ENCODE measurements at regions of chr6 and their contacts with region 1.

Region 1: DNA sequence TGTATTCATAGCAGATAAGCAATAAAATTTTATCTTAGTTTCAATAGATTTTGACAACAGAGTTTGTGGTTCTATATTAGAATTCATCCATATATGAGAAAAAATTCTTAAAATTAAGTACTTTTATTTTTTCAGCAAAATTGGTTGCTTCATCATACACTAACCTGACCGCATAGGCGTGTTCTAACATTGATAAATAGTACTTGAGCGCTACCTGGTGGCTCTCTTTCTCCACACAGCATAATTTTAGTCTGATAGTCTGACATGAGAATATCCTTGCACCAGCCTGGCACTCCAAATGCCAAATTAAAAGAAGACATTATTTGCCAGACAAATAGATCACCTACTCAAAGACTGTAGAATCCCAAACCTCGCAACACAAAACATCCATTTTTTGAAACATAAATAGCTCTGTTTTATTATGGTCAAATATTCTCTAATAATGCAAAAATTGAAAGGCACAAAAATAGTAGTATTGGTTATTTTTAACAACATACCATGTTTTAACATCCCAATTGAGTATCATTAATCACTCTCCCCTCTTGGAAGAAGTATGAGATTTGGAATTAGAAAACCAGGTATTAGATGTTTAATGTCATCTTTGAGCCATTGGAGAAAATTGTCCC is 33.0 kb upstream of the FILIP1 start:
- DNase-seq: peak; percentile 34
- H3K4me3 ChIP-seq: no peak overlapping the region
- H3K27ac ChIP-seq: no peak overlapping the region
- H3K27me3 ChIP-seq: no peaks in the 10 kb centered on the region
- CTCF ChIP-seq: peak; percentile 75

Region 2: GRCh38 chr6:75275067-75275466 is 251.5 kb before region 1 on chr6:
- CTCF ChIA-PET with region 1: interaction called, 20 read pairs
- POLR2A ChIA-PET with region 1: no interaction called
- DNase-seq: peak; percentile 70
- H3K4me3 ChIP-seq: no peak overlapping the region
- H3K27ac ChIP-seq: no peak overlapping the region
- H3K27me3 ChIP-seq: no peaks in the 10 kb centered on the region
- CTCF ChIP-seq: no peak

Region 3: DNA sequence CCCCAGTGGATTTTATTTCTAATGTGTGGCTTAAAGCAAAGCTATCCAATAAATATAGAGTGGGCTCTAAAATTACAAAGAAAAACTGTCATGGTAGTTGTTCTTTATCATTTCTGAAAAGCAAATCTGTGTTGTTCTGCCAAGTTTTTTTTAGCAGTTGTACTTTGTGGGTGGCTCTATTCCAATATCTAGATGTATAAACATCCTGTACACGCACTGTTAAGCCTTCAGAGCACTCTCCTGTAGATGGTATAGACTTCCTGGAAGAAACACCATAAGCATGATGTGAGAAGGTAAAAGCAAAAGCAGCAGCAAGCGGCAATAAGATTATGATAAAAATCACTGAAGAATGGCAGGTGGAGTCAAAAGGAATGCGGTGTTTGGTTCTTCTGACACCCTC is 220.6 kb before region 1 on chr6:
- CTCF ChIA-PET with region 1: interaction called, 18 read pairs
- POLR2A ChIA-PET with region 1: no interaction called
- DNase-seq: no peak
- H3K4me3 ChIP-seq: no peak overlapping the region
- H3K27ac ChIP-seq: no peak overlapping the region
- H3K27me3 ChIP-seq: no peaks in the 10 kb centered on the region
- CTCF ChIP-seq: no peak

Region 4: GRCh38 chr6:75546381-75546780 is 19.8 kb after region 1 on chr6:
- CTCF ChIA-PET with region 1: interaction called, 14 read pairs
- POLR2A ChIA-PET with region 1: no interaction called
- DNase-seq: no peak
- H3K4me3 ChIP-seq: no peak overlapping the region
- H3K27ac ChIP-seq: no peak overlapping the region
- H3K27me3 ChIP-seq: no peaks in the 10 kb centered on the region
- CTCF ChIP-seq: peak; percentile 31

Region 5: GRCh38 chr6:75986935-75987334 is 460.3 kb after region 1 on chr6:
- CTCF ChIA-PET with region 1: no interaction called
- POLR2A ChIA-PET with region 1: no interaction called
- DNase-seq: no peak
- H3K4me3 ChIP-seq: no peak overlapping the region
- H3K27ac ChIP-seq: no peak overlapping the region
- H3K27me3 ChIP-seq: no peaks in the 10 kb centered on the region
- CTCF ChIP-seq: no peak